Lower leg skin (tissue), 4 donors: ENCODE measurements at regions of chr7 and their contacts with region 1.

Region 1: DNA sequence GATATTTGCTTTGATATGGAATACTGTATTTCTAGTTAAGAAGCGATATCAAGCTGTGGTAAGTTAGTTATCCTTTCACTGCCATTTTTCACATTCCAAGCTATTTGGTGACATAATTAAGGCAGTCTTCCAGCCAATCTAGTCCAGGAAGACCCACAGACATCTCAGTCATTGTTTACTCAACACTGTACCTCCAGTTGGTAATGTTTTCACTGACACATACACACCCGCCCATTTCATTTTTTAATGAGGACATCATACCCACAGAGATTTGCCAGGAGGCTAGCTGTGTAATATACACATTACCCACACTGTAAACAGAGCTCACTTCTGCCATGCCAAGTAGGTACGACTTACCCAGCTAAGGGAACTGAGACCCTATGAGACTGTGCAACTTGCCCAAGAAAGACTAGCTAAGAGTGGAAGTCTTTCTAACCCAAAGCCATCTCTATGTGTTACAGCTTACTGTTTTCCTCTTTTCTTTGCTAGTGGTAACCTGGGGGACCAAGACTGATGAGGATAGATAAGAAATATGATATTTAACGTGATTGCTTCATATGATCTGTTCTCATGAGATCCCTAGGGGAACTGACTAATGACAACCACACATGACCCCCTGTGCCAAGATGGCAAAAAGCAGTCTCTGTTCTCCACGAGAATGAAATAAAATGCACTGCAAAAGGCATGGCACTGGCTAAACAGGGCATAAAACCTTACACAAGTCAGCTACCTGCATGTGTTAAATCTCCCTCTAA is 179.0 kb downstream of the DGKI start:
- DNase-seq: no peak
- H3K4me3 ChIP-seq: no peak overlapping the region
- CTCF ChIP-seq: no peak
- POLR2A ChIP-seq: no peak

Region 2: DNA sequence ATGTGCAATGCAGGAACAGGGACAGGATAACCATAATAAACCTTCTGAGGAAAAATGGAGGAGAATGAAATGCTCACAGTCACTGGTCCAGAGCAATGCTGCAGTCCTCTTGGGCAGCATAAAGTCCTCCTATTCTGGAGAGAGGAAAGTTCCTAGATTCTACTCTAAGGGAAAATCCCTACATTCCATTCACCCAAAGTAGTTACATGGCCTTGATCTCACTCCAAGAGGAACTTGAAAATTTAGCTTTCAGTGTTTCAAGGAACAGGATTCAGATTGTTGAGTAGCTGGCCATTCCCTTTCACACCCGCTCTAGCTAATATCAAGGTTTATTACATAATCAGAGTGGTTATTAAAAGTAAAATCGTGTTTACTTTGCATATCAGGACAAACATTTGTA is 631.0 kb before region 1 on chr7:
- intact Hi-C with region 1: no loop called
- DNase-seq: no peak
- H3K4me3 ChIP-seq: no peak overlapping the region
- CTCF ChIP-seq: no peak
- POLR2A ChIP-seq: no peak

Region 3: GRCh38 chr7:137886746-137887145 is 218.9 kb after region 1 on chr7:
- intact Hi-C with region 1: loop called (anchors 5 kb)
- DNase-seq: no peak
- H3K4me3 ChIP-seq: no peak overlapping the region
- CTCF ChIP-seq: no peak
- POLR2A ChIP-seq: no peak